ENCODE measurements at regions of chr5 and their contacts with region 1.

Region 1: DNA sequence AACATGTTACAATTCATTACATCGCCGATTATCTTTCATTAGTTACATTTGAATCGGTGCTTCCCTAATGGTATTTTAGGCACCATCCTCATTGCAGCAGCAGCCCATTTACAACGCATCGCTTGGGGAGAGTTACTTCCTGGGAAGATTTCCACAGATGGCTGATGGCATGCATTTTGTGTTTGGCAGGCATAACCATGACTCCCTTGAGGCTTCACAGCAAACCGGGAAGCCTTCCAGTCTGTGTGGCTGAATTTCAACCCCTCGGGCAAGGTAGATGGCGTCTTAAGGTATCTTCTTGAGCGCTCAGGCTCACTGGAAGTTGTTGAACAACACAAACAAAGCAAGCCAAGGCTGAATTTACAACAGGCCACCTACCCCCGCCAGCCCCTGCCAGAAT is 1.6 kb upstream of the DNAH5 start:
- DNase-seq: no peak
- H3K4me3 ChIP-seq: no peak overlapping the region
- CTCF ChIP-seq: no peak

Region 2: DNA sequence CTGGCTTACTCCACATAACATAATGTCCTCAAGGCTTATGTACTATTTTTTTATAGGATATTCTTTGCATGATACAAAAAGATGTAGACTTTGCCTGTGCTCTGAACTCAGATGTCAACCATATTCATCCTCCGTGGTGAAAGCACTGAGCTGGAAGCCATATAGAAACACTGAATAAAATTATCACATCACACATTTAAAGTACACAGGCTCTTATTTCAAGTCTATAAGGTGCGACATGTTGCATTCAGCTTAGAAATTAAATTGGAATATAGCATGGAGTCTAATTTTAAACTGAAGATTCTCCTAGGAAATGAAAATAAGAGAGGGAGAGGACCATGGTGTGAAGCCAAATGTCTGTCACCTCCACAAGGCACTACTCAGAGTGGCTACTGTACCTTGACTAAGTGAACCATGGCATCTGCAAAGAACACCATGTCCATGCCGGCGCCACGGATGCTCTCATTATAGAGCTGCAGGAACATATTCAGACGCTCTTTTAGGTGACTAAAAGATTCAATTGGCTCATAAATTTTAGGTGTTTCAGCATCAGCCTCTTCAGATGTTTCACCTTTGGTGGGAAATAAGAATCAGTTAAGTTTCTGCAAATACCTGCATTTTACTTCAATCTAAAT is 160.2 kb before region 1 on chr5:
- CTCF ChIA-PET with region 1: no interaction called
- POLR2A ChIA-PET with region 1: no interaction called
- DNase-seq: no peak
- H3K4me3 ChIP-seq: no peak overlapping the region
- CTCF ChIP-seq: no peak

Region 3: DNA sequence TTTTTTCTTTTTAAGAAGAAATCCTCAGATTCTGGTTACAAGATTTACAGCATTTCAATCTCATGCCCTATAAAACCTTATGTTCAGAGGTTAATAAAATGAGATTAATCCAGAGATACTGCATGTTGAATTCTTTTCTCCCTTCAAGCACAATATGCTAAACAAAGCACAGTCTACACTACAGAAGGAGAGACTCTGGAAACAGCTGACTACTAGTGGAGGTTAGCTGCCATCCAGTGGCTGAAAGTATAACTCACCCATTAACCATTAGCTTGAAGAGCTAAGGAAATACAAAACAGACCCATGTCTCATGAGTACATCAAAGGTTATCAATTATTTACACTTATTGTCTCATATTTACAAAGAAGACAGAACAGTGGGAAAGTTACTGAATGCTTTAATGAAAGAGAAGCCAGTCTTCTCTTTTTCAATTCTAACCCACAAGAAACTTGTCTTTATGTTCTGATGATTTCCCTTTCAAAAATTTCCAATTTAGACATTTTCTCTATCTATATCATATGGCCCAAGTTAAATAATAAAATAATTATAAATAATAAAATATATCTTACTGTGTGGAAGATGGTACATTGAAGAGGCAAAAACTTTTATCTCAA is 11.0 kb after region 1 on chr5:
- CTCF ChIA-PET with region 1: interaction called, 15 read pairs
- POLR2A ChIA-PET with region 1: no interaction called
- DNase-seq: no peak
- H3K4me3 ChIP-seq: no peak overlapping the region
- CTCF ChIP-seq: peak; percentile 67

Region 4: GRCh38 chr5:13972034-13972433 is 25.9 kb after region 1 on chr5:
- CTCF ChIA-PET with region 1: no interaction called
- POLR2A ChIA-PET with region 1: no interaction called
- DNase-seq: no peak
- H3K4me3 ChIP-seq: no peak overlapping the region
- CTCF ChIP-seq: no peak

Region 5: GRCh38 chr5:14004598-14005394 is 58.7 kb after region 1 on chr5:
- CTCF ChIA-PET with region 1: no interaction called
- POLR2A ChIA-PET with region 1: no interaction called
- DNase-seq: no peak
- H3K4me3 ChIP-seq: no peak overlapping the region
- CTCF ChIP-seq: no peak

Region 6: DNA sequence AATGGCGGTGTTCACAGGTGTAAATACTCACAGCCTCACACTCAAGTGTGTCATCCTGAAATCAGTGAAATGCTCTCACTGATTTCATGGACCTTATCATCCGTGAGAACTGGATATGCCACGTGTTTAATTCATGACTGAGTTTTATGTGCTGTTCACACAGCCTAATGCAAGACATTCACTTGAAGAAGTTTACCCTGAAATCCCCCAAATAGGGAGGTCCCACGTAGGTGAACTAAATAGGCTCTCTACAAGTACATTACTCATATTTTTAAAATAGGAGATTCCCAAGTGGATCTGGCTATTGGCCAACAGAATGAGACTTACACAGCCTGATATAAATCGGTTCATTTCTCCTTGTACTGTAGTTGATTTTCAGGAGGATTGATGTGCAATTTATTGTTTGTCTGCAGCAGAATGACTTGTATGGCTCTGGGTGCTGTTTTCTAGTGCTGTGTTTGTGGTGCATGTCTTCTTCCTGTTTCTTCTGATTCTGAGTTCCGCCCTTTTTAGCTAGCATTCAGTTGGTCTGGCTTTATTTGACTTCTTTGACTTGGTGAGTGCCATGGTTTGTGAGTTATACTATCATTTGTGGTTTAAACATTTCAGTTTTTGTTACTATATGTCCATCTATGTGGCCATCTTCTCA is 222.2 kb after region 1 on chr5:
- CTCF ChIA-PET with region 1: no interaction called
- POLR2A ChIA-PET with region 1: no interaction called
- DNase-seq: no peak
- H3K4me3 ChIP-seq: no peak overlapping the region
- CTCF ChIP-seq: no peak

Measured in AG04449 (cell line).